ENCODE measurements at regions of chr12 and their contacts with region 1.

Region 1: GRCh38 chr12:8779862-8780261 is 42.6 kb upstream of the A2ML1 start:
- DNase-seq: no peak
- ATAC-seq: no peak
- H3K4me3 ChIP-seq: no peak overlapping the region
- H3K27ac ChIP-seq: no peak overlapping the region
- H3K4me1 ChIP-seq: peaks cover 0 to 2% of the 10 kb centered on the region in 2 donors
- H3K27me3 ChIP-seq: no peaks in the 10 kb centered on the region

Region 2: GRCh38 chr12:8734873-8735381 is 44.9 kb before region 1 on chr12:
- intact Hi-C with region 1: loop called in 1 of 2 experiments (anchors 5 kb)
- DNase-seq: no peak
- ATAC-seq: peak; percentile 66
- H3K4me3 ChIP-seq: no peak overlapping the region
- H3K27ac ChIP-seq: peak overlapping the region; percentile 84 to 87
- H3K4me1 ChIP-seq: peaks cover 0 to 3% of the 10 kb centered on the region in 2 donors
- H3K27me3 ChIP-seq: no peaks in the 10 kb centered on the region

Region 3: GRCh38 chr12:8922543-8922942 is 142.7 kb after region 1 on chr12:
- intact Hi-C with region 1: no loop called
- DNase-seq: no peak
- ATAC-seq: no peak
- H3K4me3 ChIP-seq: no peak overlapping the region
- H3K27ac ChIP-seq: no peak overlapping the region
- H3K4me1 ChIP-seq: no peaks in the 10 kb centered on the region
- H3K27me3 ChIP-seq: no peaks in the 10 kb centered on the region